ENCODE measurements at regions of chr3 and their contacts with region 1.

Region 1: DNA sequence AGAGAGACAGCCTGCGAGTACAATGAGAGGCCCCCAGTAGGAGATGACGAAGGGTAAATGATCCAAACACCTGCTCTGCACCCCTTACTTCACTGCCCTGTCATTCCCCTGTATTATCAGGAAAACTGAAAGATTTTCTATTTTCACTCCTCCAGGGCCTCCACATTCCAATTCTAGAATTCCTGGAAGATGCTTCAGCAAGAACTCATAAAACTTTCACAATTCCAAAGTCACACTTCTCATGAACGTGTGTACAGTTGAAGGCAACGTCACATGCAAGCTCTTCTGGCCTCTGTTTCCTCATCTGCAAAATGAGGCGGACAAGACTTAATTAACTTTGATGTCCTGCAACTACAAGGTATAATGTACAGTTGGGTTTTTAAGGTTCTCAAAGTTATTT is 62.8 kb upstream of the SPATA12 start:
- DNase-seq: no peak
- ATAC-seq: no peak
- H3K4me3 ChIP-seq: no peak overlapping the region
- H3K27ac ChIP-seq: no peak overlapping the region
- H3K4me1 ChIP-seq: no peaks in the 10 kb centered on the region; the same call in 1 of the 2 replicates
- H3K27me3 ChIP-seq: no peaks in the 10 kb centered on the region
- CTCF ChIP-seq: no peak
- EP300 ChIP-seq: no peak
- POLR2A ChIP-seq: no peak
- RAD21 ChIP-seq: no peak

Region 2: DNA sequence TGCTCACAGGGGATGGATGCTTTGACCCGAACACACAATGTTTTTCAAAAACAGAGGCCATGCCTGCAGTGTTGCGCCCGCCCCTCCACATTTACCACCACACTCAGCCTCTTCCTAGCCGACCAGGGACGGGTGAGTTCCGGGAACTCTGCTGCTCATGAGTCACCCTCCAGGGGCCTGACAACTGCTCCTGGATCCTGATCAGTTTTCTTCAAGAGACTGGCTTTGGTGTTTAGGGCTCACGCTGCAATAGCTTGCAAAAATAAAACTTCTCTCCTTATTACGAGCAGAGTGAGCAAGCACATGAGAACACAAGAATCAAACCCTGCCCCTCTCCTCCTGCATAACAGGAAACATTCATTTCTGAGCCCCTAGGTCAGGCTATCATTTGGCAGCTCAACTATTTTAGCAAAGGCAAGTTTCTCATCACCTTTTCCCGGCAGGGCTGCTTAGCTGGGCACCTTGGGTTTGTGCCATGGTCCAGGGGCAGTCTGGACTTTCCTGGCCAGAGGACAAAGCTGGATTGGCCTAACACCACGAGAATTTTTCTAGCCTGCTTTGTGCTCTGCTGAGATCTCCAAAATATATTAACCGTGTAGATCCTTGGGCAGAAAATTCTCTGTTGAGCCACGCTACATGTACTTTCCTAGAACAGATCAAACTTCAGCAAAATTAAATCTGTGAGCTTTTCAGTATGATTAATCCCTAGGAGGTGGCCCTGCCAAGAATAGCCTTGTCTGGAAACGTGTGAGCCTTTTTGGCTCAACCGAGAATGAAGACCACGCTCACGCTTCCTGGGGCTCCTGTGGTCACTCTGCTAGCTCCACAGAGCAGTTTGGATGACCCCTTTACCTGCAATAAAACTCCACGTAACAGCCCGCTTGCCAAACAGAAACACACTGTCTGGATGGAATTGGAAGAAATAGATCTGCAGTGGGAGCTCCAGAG is 10.1 kb after region 1 on chr3:
- CTCF ChIA-PET with region 1: interaction called, 19 read pairs
- POLR2A ChIA-PET with region 1: no interaction called
- RAD21 ChIA-PET with region 1: no interaction called
- SMC1A ChIA-PET with region 1: interaction called, 12 read pairs
- in situ Hi-C with region 1: no loop called
- intact Hi-C with region 1: no loop called
- DNase-seq: no peak
- ATAC-seq: no peak
- H3K4me3 ChIP-seq: no peak overlapping the region
- H3K27ac ChIP-seq: no peak overlapping the region
- H3K4me1 ChIP-seq: no peaks in the 10 kb centered on the region
- H3K27me3 ChIP-seq: no peaks in the 10 kb centered on the region
- CTCF ChIP-seq: no peak
- EP300 ChIP-seq: no peak
- POLR2A ChIP-seq: no peak
- RAD21 ChIP-seq: no peak

Region 3: DNA sequence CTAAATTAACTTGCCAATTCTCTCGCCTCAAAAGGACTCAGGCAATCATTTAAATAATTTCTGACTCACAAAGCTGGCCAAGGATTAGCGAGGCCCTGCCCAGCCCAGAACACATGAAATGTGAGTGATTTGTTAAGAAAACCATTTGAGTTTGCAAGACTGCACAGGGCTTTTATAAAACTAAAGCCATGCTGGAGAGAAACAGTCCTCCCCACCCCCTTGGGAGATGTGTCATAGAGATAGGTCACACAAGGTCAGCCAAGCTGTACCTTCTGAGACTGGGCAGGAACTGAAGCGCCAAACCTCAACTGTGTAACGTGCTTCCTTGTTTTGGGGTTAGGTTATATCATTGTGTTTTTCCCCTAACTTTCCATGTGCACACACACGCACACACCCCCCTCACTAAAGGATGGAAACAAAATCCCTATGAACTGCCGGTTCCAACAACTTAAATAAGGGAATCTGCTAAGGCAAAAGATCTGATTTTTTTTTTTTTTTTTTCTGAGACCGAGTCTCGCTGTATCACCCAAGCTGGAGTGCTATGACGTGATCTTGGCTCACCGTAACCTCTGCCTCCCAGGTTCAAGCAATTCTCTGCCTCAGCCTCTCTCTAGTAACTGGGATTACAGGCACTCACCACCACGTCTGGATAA is 70.9 kb after region 1 on chr3:
- CTCF ChIA-PET with region 1: interaction called, 29 read pairs
- POLR2A ChIA-PET with region 1: interaction called, 4 read pairs
- RAD21 ChIA-PET with region 1: no interaction called
- SMC1A ChIA-PET with region 1: interaction called, 5 read pairs
- in situ Hi-C with region 1: no loop called
- intact Hi-C with region 1: no loop called
- DNase-seq: peak; percentile 95
- ATAC-seq: peak; percentile 97
- H3K4me3 ChIP-seq: no peak overlapping the region
- H3K27ac ChIP-seq: peak overlapping the region; percentile 8; the same call in 1 of the 2 replicates
- H3K4me1 ChIP-seq: peaks cover 4% of the 10 kb centered on the region
- H3K27me3 ChIP-seq: no peaks in the 10 kb centered on the region
- CTCF ChIP-seq: no peak
- EP300 ChIP-seq: peak; percentile 97 to 98
- POLR2A ChIP-seq: no peak
- RAD21 ChIP-seq: peak; percentile 13; the same call in 1 of the 2 replicates

Region 4: DNA sequence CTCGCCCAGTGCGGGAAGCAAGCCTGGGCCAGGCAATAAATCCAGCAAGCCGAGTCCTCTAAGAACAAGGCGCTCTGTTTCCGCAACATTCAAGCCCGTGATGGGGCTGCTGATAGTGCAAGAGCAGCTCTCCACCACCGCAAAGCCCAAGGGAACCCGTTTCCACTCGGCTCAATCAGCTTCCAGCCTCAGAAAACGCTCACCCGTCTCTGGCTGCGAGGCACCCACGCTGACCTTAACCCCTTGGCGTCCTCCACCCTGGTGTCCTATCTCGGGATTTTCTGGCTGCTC is 80.6 kb after region 1 on chr3:
- CTCF ChIA-PET with region 1: interaction called, 22 read pairs
- POLR2A ChIA-PET with region 1: no interaction called
- RAD21 ChIA-PET with region 1: interaction called, 6 read pairs
- SMC1A ChIA-PET with region 1: interaction called, 5 read pairs
- in situ Hi-C with region 1: no loop called
- intact Hi-C with region 1: loop called (anchors 5 kb)
- DNase-seq: no peak
- ATAC-seq: peak; percentile 65
- H3K4me3 ChIP-seq: peak overlapping the region; percentile 65
- H3K27ac ChIP-seq: no peak overlapping the region
- H3K4me1 ChIP-seq: no peaks in the 10 kb centered on the region
- H3K27me3 ChIP-seq: peaks cover 3 to 16% of the 10 kb centered on the region in 2 experiments
- CTCF ChIP-seq: no peak
- EP300 ChIP-seq: no peak
- POLR2A ChIP-seq: no peak
- RAD21 ChIP-seq: no peak

Region 5: GRCh38 chr3:57094575-57094974 is 96.9 kb after region 1 on chr3:
- CTCF ChIA-PET with region 1: interaction called, 60 read pairs
- POLR2A ChIA-PET with region 1: no interaction called
- RAD21 ChIA-PET with region 1: interaction called, 10 read pairs
- SMC1A ChIA-PET with region 1: interaction called, 7 read pairs
- in situ Hi-C with region 1: no loop called
- intact Hi-C with region 1: loop called (anchors 1 kb)
- DNase-seq: no peak
- ATAC-seq: no peak
- H3K4me3 ChIP-seq: no peak overlapping the region
- H3K27ac ChIP-seq: no peak overlapping the region
- H3K4me1 ChIP-seq: no peaks in the 10 kb centered on the region
- H3K27me3 ChIP-seq: no peaks in the 10 kb centered on the region; a peak in 1 of 4 replicates
- CTCF ChIP-seq: no peak
- EP300 ChIP-seq: no peak
- POLR2A ChIP-seq: no peak
- RAD21 ChIP-seq: no peak

Region 6: DNA sequence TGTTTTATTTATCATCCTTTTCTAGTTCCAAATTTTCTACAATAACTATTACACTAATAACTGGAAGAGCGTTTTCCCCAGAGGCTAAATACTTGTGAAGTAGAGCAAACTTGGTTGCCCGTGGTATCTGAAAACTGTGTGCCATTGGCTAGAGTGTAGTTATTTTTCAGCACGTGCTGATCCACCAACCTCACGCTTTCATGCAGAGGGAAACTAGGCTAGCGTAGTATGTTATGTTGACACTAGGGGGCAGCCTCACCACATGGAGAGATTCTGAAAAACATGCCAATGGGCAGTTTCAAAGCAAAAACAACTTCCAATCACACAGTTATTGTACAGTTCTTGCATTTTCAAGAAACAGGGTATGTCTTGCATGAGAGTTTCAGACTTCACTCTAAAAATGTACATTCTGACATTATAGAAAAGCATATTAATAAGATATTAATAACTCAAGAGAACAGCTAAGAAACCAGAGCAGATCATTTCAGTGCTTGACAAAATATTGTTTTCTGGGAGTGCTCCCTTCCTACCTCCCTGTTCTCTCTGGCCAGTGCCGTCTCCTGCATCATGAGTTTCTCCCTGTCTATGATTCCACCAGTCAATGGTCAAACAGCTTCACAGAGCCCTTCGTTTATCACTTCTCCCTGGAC is 102.5 kb after region 1 on chr3:
- CTCF ChIA-PET with region 1: interaction called, 60 read pairs
- POLR2A ChIA-PET with region 1: no interaction called
- RAD21 ChIA-PET with region 1: interaction called, 5 read pairs
- SMC1A ChIA-PET with region 1: interaction called, 4 read pairs
- in situ Hi-C with region 1: no loop called
- intact Hi-C with region 1: no loop called
- DNase-seq: peak; percentile 16
- ATAC-seq: peak; percentile 96
- H3K4me3 ChIP-seq: no peak overlapping the region
- H3K27ac ChIP-seq: no peak overlapping the region
- H3K4me1 ChIP-seq: no peaks in the 10 kb centered on the region
- H3K27me3 ChIP-seq: no peaks in the 10 kb centered on the region
- CTCF ChIP-seq: peak; percentile 73 to 91 (median 84)
- EP300 ChIP-seq: no peak
- POLR2A ChIP-seq: no peak
- RAD21 ChIP-seq: peak; percentile 91